SK-N-SH (cell line): ENCODE measurements at regions of chr6 and their contacts with region 1.

Region 1: GRCh38 chr6:105363100-105363754 is 39.7 kb downstream of the PREP start:
- DNase-seq: peak; percentile 28
- H3K4me3 ChIP-seq: no peak overlapping the region
- H3K27ac ChIP-seq: peak overlapping the region in 1 of 2 experiments; percentile 3; a peak in 1 of 4 replicates
- H3K4me1 ChIP-seq: peaks cover 8 to 16% of the 10 kb centered on the region in 2 experiments; a peak in 3 of 4 replicates
- H3K27me3 ChIP-seq: no peaks in the 10 kb centered on the region
- CTCF ChIP-seq: peak; percentile 72
- EP300 ChIP-seq: no peak
- RAD21 ChIP-seq: peak; percentile 83

Region 2: GRCh38 chr6:105077596-105078385 is 285.4 kb before region 1 on chr6:
- CTCF ChIA-PET with region 1: interaction called, 25 read pairs
- POLR2A ChIA-PET with region 1: no interaction called
- DNase-seq: peak; percentile 31
- H3K4me3 ChIP-seq: no peak overlapping the region
- H3K27ac ChIP-seq: peak overlapping the region; percentile 0 to 64; a peak in 3 of 4 replicates
- H3K4me1 ChIP-seq: peaks cover 0 to 6% of the 10 kb centered on the region in 2 experiments; a peak in 2 of 4 replicates
- H3K27me3 ChIP-seq: no peaks in the 10 kb centered on the region
- CTCF ChIP-seq: peak; percentile 85
- EP300 ChIP-seq: no peak
- RAD21 ChIP-seq: peak; percentile 87

Region 3: DNA sequence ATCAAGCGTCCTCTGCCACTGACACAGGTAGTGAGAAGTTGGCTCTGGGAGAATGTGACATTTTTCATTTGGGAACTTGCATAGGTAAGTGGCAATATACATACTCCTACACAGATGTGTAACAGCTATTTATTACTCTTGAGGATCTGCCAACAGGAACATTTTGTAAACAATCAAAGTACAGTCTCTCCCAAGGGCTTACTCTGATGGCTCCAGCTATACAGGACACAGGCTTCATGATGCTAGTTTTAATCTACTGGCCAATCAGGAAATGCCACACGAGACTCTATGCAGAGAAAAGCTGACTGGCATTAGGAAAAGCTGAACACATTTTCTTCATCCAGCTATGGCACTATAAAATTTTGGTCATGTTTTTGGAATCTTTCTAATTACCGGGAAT is 241.2 kb before region 1 on chr6:
- CTCF ChIA-PET with region 1: interaction called, 11 read pairs
- POLR2A ChIA-PET with region 1: no interaction called
- DNase-seq: no peak
- H3K4me3 ChIP-seq: no peak overlapping the region
- H3K27ac ChIP-seq: no peak overlapping the region
- H3K4me1 ChIP-seq: no peaks in the 10 kb centered on the region
- H3K27me3 ChIP-seq: no peaks in the 10 kb centered on the region
- CTCF ChIP-seq: no peak
- EP300 ChIP-seq: no peak
- RAD21 ChIP-seq: no peak

Region 4: DNA sequence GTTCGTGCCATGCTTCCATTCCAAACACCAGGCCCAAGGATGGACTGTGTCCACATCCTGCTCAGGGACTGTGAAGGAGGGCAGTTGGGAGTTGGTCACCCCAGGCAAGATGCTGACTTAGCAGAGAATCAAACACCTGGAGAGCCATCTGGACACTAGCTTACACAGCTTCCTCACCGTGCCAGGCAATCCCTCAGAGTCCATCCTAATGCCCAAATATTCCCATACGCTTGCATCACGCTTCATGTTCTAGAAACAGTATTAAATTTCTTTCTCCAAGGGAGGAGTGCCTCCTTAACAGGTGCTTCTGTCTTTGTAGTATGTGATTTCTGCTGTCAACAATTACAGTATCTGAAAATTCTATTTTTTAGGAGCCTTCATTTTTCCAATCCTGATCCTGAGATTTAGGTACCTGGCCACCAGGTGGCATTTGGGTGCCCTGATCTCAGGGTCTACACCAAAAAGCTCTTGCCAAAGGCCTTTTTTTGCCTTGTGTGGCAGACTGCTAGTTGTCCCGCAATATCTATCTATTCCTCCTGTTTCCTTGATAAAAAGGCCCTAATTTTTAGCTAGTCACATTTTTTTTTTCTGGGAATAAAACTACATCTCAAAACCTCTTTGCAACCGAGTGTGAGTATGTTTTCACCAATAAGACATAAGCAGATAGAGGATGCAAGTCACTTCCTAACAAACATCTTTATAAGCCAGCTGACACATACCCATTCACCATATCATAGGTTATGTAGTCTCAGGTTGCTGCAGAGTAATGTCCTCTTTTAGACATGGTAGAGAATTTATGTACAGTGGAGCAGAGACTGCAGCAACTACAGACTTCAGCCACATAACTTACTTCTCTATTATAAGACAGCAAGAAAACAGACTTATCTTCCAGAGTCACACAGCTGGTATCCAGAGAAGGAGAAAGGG is 45.4 kb before region 1 on chr6:
- CTCF ChIA-PET with region 1: interaction called, 15 read pairs
- POLR2A ChIA-PET with region 1: no interaction called
- DNase-seq: no peak
- H3K4me3 ChIP-seq: no peak overlapping the region
- H3K27ac ChIP-seq: 0 out of 4 replicates have a peak overlapping the region, but pooled peaks of 1 of the 2 experiments have one; percentile 3
- H3K4me1 ChIP-seq: peaks cover 10 to 32% of the 10 kb centered on the region in 2 experiments; a peak in 3 of 4 replicates
- H3K27me3 ChIP-seq: no peaks in the 10 kb centered on the region
- CTCF ChIP-seq: peak; percentile 45
- EP300 ChIP-seq: no peak
- RAD21 ChIP-seq: peak; percentile 45; the same call in 1 of the 2 replicates

Region 5: GRCh38 chr6:105346052-105346451 is 17.2 kb before region 1 on chr6:
- CTCF ChIA-PET with region 1: interaction called, 17 read pairs
- POLR2A ChIA-PET with region 1: no interaction called
- DNase-seq: no peak
- H3K4me3 ChIP-seq: no peak overlapping the region
- H3K27ac ChIP-seq: peak overlapping the region; percentile 40 to 67
- H3K4me1 ChIP-seq: peaks cover 6 to 18% of the 10 kb centered on the region in 2 experiments
- H3K27me3 ChIP-seq: no peaks in the 10 kb centered on the region
- CTCF ChIP-seq: no peak
- EP300 ChIP-seq: peak in 1 of 2 experiments; percentile 19; a peak in 1 of 4 replicates
- RAD21 ChIP-seq: no peak

Region 6: DNA sequence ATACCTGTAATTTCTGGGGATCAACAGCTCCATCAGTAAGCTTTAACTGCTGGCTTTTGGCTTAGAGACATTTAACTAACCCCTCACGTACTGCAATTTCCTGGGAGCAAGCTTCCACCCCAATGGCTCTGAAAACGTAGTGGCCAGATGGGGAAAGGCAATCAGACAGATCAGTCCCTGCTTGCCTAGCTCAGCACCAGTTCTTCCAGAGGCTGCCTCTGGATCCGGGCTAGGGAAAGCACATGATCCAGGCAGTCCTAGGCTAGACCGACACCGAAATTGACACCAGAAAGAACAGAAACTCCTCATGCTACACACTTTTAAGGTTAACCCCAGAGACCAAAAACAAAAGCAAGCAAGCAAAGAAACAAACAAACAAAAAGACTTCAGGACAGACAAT is 26.3 kb after region 1 on chr6:
- CTCF ChIA-PET with region 1: interaction called, 14 read pairs
- POLR2A ChIA-PET with region 1: no interaction called
- DNase-seq: no peak
- H3K4me3 ChIP-seq: no peak overlapping the region
- H3K27ac ChIP-seq: no peak overlapping the region
- H3K4me1 ChIP-seq: peaks cover 0 to 9% of the 10 kb centered on the region in 2 experiments; a peak in 2 of 4 replicates
- H3K27me3 ChIP-seq: no peaks in the 10 kb centered on the region
- CTCF ChIP-seq: no peak
- EP300 ChIP-seq: no peak
- RAD21 ChIP-seq: no peak